ENCODE measurements at regions of chr5 and their contacts with region 1.

Region 1: DNA sequence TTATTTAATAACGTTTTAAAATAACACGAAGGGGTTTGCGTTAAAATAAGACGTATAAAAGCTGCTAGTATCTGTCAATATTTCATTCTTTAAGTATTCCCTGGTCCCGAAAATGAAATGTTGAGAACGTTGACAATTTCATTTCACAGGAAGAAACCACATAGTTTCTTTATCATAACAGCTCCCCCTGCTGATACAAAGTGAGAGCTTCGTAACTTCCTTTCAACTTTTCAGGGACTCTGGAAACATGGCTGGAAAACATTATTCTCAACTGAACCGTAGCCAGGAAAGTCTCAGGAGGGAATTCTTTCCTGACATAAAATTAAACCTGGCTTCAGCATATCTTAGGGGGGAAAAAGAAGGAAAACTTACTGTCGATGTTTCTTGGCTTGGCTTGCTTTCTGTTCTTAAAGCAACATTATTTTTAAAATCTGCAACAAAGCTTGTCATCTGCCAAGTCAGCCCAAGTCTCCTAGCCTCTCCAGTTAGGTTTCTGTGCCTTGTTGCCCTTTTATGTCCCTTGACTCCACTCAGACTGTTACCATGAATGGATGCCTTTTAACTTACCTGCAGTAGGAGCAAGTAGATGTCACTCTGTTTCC is 122.9 kb upstream of the DAB2 start:
- DNase-seq: peak; percentile 73
- H3K4me3 Mint-ChIP-seq: no peak overlapping the region
- H3K27ac Mint-ChIP-seq: no peak overlapping the region
- H3K4me1 Mint-ChIP-seq: no peaks in the 10 kb centered on the region
- H3K27me3 Mint-ChIP-seq: no peaks in the 10 kb centered on the region
- CTCF ChIP-seq: peak; percentile 65

Region 2: GRCh38 chr5:39370555-39371366 is 176.9 kb before region 1 on chr5:
- CTCF ChIA-PET with region 1: interaction called, 355 read pairs
- POLR2A ChIA-PET with region 1: interaction called, 25 read pairs
- intact Hi-C with region 1: no loop called
- DNase-seq: no peak
- H3K4me3 Mint-ChIP-seq: no peak overlapping the region
- H3K27ac Mint-ChIP-seq: no peak overlapping the region
- H3K4me1 Mint-ChIP-seq: no peaks in the 10 kb centered on the region
- H3K27me3 Mint-ChIP-seq: no peaks in the 10 kb centered on the region
- CTCF ChIP-seq: no peak

Region 3: DNA sequence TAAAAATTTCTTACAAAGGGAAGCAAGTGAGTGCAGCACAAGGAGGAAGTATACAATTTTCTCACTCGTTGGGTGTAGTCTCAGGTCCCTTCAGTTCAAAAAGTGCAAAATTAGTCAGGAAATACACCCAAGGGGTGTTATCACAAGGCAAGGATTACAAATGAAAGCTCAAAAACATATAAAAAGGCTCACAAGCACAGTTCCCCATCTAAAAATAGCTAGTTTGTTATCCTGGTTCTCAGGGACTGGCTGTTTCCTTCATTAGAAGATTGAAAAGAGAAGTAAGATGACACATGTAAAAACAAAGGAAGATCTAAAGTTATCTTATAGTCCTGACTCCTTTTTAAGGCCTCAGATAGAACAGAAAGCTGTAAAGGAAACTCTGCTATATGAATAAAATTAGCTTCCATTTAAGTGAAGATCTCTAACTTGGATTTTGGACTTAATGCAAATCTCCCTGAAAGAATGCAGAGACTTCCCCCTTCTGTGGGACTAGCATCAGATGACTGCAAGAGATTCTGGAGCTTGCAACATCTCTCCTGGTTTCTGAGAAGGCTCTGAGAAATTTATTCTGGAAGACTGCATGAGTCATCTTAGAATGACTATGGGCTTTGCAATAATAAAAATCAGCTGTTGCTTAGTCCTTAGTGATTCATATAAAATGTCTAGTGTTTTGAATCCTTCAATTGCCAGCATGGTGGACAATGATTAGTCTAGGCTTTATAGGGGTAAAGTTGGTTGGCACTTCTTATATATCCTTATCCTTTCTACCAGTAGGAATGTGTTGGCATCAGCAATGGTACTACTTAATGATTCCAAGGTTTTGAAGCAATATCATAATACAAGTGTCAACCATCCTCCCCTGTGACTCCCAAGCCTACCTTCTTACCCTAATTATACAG is 148.3 kb before region 1 on chr5:
- CTCF ChIA-PET with region 1: interaction called, 20 read pairs
- POLR2A ChIA-PET with region 1: no interaction called
- intact Hi-C with region 1: no loop called
- DNase-seq: peak; percentile 94
- H3K4me3 Mint-ChIP-seq: no peak overlapping the region
- H3K27ac Mint-ChIP-seq: peak overlapping the region; percentile 88
- H3K4me1 Mint-ChIP-seq: peaks cover 23% of the 10 kb centered on the region
- H3K27me3 Mint-ChIP-seq: no peaks in the 10 kb centered on the region
- CTCF ChIP-seq: no peak

Region 4: GRCh38 chr5:39558541-39558940 is 10.9 kb after region 1 on chr5:
- CTCF ChIA-PET with region 1: interaction called, 12 read pairs
- POLR2A ChIA-PET with region 1: no interaction called
- intact Hi-C with region 1: no loop called
- DNase-seq: no peak
- H3K4me3 Mint-ChIP-seq: no peak overlapping the region
- H3K27ac Mint-ChIP-seq: no peak overlapping the region
- H3K4me1 Mint-ChIP-seq: no peaks in the 10 kb centered on the region
- H3K27me3 Mint-ChIP-seq: no peaks in the 10 kb centered on the region
- CTCF ChIP-seq: no peak